MCF 10A (cell line): ENCODE measurements at regions of chr18 and their contacts with region 1.

Region 1: GRCh38 chr18:830315-830901 is 18.4 kb upstream of the YES1 start:
- DNase-seq: peak; percentile 23
- H3K4me3 Mint-ChIP-seq: no peak overlapping the region
- H3K27ac Mint-ChIP-seq: no peak overlapping the region
- H3K4me1 Mint-ChIP-seq: peaks cover 8% of the 10 kb centered on the region
- H3K27me3 Mint-ChIP-seq: no peaks in the 10 kb centered on the region
- CTCF ChIP-seq: no peak

Region 2: DNA sequence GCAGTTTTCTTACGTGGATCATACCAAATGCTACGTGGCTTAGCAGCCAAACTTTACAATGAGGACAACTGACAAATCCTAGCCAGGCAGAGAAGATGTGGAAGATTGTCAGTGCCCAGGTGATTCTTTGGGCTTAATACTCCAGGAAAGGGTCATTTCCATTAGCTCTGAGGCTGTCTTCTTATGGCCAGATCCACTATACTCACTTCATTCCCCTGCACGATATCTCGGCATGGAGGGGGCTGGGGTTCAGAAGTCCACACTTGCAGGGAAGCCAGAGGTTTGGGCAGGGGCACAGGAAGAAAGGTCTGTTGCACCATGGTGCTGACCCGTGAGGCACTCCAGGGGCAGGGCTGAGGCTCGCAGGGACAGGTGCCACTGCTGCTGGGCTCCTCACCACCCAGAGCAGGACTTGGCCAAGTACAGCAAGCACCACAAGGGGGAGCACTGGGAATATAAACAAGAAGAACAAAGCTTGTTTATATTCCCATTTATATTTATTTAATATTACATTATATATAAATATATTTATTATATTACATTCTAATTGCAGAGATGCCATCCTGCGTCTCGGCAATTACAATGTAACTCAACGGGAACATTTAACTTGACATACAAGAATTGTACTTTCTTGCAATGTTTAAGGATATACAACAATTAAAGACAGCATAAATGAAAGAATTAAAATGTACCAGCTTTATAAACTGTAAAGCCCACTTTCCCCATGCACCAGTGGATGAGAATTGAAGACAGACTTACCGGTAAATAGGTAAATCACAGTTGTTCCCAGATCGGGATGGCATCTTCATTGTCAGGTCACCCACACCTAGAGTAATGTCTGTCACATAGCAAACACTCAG is 206.4 kb before region 1 on chr18:
- CTCF ChIA-PET with region 1: interaction called, 266 read pairs
- POLR2A ChIA-PET with region 1: interaction called, 7 read pairs
- intact Hi-C with region 1: loop called (anchors 1 kb)
- DNase-seq: peak; percentile 69
- H3K4me3 Mint-ChIP-seq: no peak overlapping the region
- H3K27ac Mint-ChIP-seq: no peak overlapping the region
- H3K4me1 Mint-ChIP-seq: peaks cover 8% of the 10 kb centered on the region
- H3K27me3 Mint-ChIP-seq: peaks cover 24% of the 10 kb centered on the region
- CTCF ChIP-seq: peak; percentile 62

Region 3: GRCh38 chr18:677951-678381 is 152.4 kb before region 1 on chr18:
- CTCF ChIA-PET with region 1: interaction called, 10 read pairs
- POLR2A ChIA-PET with region 1: no interaction called
- intact Hi-C with region 1: no loop called
- DNase-seq: no peak
- H3K4me3 Mint-ChIP-seq: no peak overlapping the region
- H3K27ac Mint-ChIP-seq: no peak overlapping the region
- H3K4me1 Mint-ChIP-seq: no peaks in the 10 kb centered on the region
- H3K27me3 Mint-ChIP-seq: no peaks in the 10 kb centered on the region
- CTCF ChIP-seq: no peak

Region 4: DNA sequence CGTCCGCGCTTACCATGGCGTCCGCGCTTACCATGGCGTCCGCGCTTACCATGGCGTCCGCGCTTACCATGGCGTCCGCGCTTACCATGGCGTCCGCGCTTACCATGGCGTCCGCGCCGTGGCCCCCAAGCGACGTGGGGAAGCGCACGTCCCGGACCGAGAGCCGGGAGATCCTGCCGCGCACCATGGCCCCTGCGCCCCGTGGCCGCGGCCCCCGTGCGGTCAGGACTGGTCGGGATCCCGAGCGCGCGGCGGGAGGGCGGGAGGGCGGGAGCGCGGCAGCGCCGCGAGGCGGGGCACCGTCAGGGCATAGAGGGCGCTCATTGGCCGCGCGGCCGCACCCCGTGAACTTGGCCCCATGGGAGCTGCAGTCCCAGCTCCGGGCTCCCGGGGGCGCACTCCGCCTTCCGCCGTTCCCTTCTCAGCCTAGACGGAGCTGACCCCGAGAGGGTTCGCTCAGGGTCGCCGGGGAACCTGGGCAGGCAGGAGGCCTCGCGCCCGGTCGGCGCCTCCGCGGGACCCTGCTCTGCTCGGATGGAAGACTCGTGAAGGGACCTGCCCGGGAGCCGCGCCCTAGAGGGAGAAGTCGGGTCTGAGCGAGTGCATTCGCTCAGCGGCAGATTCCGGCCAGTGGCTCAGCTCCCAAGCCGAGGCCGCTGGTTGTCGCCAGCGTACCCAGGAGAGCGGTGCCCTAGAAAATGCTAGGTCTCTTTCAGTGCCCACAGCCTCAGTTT is 117.8 kb before region 1 on chr18 and contains the start of gene ENOSF1:
- CTCF ChIA-PET with region 1: interaction called, 31 read pairs
- POLR2A ChIA-PET with region 1: interaction called, 8 read pairs
- intact Hi-C with region 1: loop called (anchors 1 kb)
- DNase-seq: peak; percentile 86
- H3K4me3 Mint-ChIP-seq: peak within 1 kb of the TSS; percentile 88
- H3K27ac Mint-ChIP-seq: peak within 1 kb of the TSS; percentile 96
- H3K4me1 Mint-ChIP-seq: peaks cover 11% of the 10 kb centered on the region
- H3K27me3 Mint-ChIP-seq: no peaks in the 10 kb centered on the region
- CTCF ChIP-seq: peak; percentile 97
- total RNA-seq, gene ENOSF1: 106 and 111 TPM in 2 replicates

Region 5: GRCh38 chr18:754666-755065 is 75.7 kb before region 1 on chr18:
- CTCF ChIA-PET with region 1: interaction called, 16 read pairs
- POLR2A ChIA-PET with region 1: no interaction called
- intact Hi-C with region 1: no loop called
- DNase-seq: no peak
- H3K4me3 Mint-ChIP-seq: no peak overlapping the region
- H3K27ac Mint-ChIP-seq: no peak overlapping the region
- H3K4me1 Mint-ChIP-seq: peaks cover 6% of the 10 kb centered on the region
- H3K27me3 Mint-ChIP-seq: no peaks in the 10 kb centered on the region
- CTCF ChIP-seq: no peak

Region 6: DNA sequence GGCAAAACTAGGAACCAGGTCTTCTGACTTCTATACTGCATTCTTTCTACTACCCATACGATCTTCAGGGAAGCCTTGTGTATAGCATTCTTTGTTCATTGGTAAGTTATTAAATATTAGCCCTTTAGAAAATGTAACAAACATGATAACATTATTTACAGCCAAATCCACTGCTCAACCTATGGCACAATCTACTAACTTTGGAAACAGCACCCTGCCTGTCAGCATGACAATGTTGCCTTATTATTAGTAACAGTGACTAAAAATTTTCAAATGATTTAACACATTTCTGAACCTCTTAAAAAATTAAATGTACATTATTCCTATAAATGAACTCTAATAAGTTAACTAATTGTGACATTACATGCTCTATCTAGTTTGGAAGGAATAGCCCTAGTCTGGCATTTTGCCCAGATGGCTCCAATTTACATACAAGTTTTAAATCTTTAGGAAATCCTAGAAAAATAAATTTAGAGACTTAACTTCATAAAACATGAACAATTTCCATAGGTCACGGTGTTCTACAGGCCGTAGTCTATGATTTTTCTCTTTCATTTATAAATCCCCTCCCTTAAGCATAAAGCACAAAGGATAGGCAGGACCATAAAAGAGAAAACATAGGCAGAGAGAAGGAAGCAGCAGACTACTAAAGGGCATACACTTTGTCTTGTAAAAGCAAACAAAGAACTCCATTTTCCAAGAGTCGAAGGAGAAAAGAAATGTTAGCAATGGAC is 52.0 kb before region 1 on chr18:
- CTCF ChIA-PET with region 1: interaction called, 13 read pairs
- POLR2A ChIA-PET with region 1: no interaction called
- intact Hi-C with region 1: no loop called
- DNase-seq: no peak
- H3K4me3 Mint-ChIP-seq: no peak overlapping the region
- H3K27ac Mint-ChIP-seq: no peak overlapping the region
- H3K4me1 Mint-ChIP-seq: peaks cover 5% of the 10 kb centered on the region
- H3K27me3 Mint-ChIP-seq: no peaks in the 10 kb centered on the region
- CTCF ChIP-seq: no peak

Region 7: GRCh38 chr18:801137-801536 is 29.3 kb before region 1 on chr18:
- CTCF ChIA-PET with region 1: interaction called, 14 read pairs
- POLR2A ChIA-PET with region 1: interaction called, 4 read pairs
- intact Hi-C with region 1: no loop called
- DNase-seq: no peak
- H3K4me3 Mint-ChIP-seq: no peak overlapping the region
- H3K27ac Mint-ChIP-seq: no peak overlapping the region
- H3K4me1 Mint-ChIP-seq: peaks cover 18% of the 10 kb centered on the region
- H3K27me3 Mint-ChIP-seq: no peaks in the 10 kb centered on the region
- CTCF ChIP-seq: no peak